ENCODE measurements at regions of chr16 and their contacts with region 1.

Region 1: GRCh38 chr16:85275533-85276249 is 163.4 kb upstream of the CIBAR2 start:
- DNase-seq: peak; percentile 95
- H3K4me3 ChIP-seq: peak overlapping the region in 1 of 2 experiments; percentile 21; a peak in 1 of 4 replicates
- H3K27ac ChIP-seq: peak overlapping the region in 1 of 2 experiments; percentile 31; a peak in 1 of 4 replicates
- H3K4me1 ChIP-seq: peaks cover 0 to 46% of the 10 kb centered on the region in 2 experiments; a peak in 2 of 4 replicates
- H3K27me3 ChIP-seq: no peaks in the 10 kb centered on the region
- CTCF ChIP-seq: peak; percentile 88
- EP300 ChIP-seq: no peak
- RAD21 ChIP-seq: peak; percentile 94

Region 2: GRCh38 chr16:85172455-85173145 is 103.1 kb before region 1 on chr16:
- CTCF ChIA-PET with region 1: interaction called, 15 read pairs
- POLR2A ChIA-PET with region 1: no interaction called
- DNase-seq: peak; percentile 83
- H3K4me3 ChIP-seq: peak overlapping the region; percentile 52 to 65
- H3K27ac ChIP-seq: peak overlapping the region; percentile 88 to 97
- H3K4me1 ChIP-seq: peaks cover 26 to 73% of the 10 kb centered on the region in 2 experiments
- H3K27me3 ChIP-seq: no peaks in the 10 kb centered on the region
- CTCF ChIP-seq: peak; percentile 53
- EP300 ChIP-seq: no peak
- RAD21 ChIP-seq: peak; percentile 44

Region 3: DNA sequence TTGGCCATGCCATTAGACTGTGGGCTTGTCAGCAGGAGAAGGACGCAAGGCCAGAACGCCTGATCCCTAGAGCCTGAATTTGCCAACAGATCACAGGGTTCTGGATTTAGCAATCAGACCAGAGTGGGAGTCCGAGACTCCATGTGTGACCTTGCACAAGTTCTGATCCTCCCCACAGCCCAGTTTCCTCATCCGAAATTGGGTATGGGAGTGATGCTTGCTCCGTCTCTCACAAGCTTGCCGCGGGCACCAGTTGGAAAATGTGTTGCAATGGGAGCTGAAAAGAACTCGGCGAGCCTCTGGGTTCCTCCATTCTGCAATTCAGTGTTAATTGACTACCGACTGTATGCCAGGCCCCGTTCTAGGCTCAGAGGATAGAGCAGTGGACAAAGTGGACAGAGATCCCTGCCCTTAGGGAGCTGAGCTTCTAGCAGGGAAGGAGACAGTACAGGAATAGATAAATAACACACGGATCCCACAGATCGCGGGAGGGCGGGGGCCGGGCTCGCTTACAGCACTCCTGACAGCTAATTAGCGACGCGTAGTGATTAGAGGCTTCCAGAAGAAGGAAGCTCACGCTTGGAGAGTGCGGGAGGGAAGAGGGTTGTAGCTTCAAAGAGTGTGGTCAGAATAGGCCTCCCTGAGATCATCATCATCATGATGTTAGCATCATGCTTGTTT is 13.0 kb before region 1 on chr16:
- CTCF ChIA-PET with region 1: interaction called, 54 read pairs
- POLR2A ChIA-PET with region 1: no interaction called
- DNase-seq: no peak
- H3K4me3 ChIP-seq: no peak overlapping the region
- H3K27ac ChIP-seq: no peak overlapping the region
- H3K4me1 ChIP-seq: peaks cover 0 to 57% of the 10 kb centered on the region in 2 experiments; a peak in 1 of 4 replicates
- H3K27me3 ChIP-seq: no peaks in the 10 kb centered on the region
- CTCF ChIP-seq: no peak
- EP300 ChIP-seq: no peak
- RAD21 ChIP-seq: no peak

Region 4: DNA sequence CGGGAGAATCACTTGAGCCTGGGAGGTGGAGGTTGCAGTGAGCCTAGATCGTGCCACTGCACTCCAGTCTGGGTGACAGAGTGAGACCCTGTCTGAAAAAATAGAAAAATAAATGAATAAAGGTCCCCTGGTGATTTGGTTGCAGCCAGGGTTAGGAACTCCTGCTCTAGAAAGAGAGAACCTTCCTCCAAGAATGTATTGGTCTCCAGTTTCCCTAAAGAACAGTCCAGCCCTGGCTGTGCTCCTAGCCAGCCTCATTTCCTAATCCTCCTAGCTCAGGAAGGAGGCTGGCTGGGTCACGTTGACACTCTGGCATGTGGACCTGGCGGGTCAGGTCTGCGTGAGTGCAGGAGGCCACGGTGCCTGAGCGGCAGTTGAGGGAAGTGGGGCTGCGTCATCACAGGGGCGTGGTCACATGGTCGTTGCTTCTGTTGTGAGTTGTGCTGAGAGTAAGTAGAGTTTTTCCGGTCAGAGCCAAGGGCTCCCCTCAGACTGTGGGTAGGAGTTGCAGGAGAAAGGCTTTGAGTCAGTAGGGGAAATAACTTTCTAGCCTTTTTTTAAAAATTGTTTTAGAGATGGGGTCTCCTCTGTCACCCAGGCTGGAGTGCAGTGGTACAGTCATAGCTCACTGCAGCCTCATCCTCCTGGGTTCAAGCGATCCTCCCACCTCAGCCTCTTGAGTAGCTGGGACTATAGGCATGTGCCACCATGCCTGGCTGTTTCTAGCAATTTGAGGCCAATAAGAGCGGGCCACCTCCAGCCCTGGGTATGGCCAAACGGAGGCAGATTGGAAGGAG is 30.5 kb after region 1 on chr16:
- CTCF ChIA-PET with region 1: interaction called, 19 read pairs
- POLR2A ChIA-PET with region 1: no interaction called
- DNase-seq: no peak
- H3K4me3 ChIP-seq: no peak overlapping the region
- H3K27ac ChIP-seq: no peak overlapping the region
- H3K4me1 ChIP-seq: peaks cover 0 to 36% of the 10 kb centered on the region in 2 experiments; a peak in 1 of 4 replicates
- H3K27me3 ChIP-seq: no peaks in the 10 kb centered on the region
- CTCF ChIP-seq: no peak
- EP300 ChIP-seq: no peak
- RAD21 ChIP-seq: no peak

Region 5: GRCh38 chr16:85369741-85370528 is 94.2 kb after region 1 on chr16:
- CTCF ChIA-PET with region 1: interaction called, 16 read pairs
- POLR2A ChIA-PET with region 1: no interaction called
- DNase-seq: peak; percentile 84
- H3K4me3 ChIP-seq: no peak overlapping the region
- H3K27ac ChIP-seq: peak overlapping the region; percentile 50 to 95; a peak in 3 of 4 replicates
- H3K4me1 ChIP-seq: peaks cover 25 to 90% of the 10 kb centered on the region in 2 experiments
- H3K27me3 ChIP-seq: no peaks in the 10 kb centered on the region
- CTCF ChIP-seq: peak; percentile 87
- EP300 ChIP-seq: no peak
- RAD21 ChIP-seq: peak; percentile 71

Region 6: GRCh38 chr16:85554112-85554813 is 278.6 kb after region 1 on chr16:
- CTCF ChIA-PET with region 1: interaction called, 11 read pairs
- POLR2A ChIA-PET with region 1: interaction called, 4 read pairs
- DNase-seq: peak; percentile 82
- H3K4me3 ChIP-seq: peak overlapping the region; percentile 75 to 84
- H3K27ac ChIP-seq: peak overlapping the region; percentile 73 to 99
- H3K4me1 ChIP-seq: peaks cover 10 to 51% of the 10 kb centered on the region in 2 experiments; a peak in 3 of 4 replicates
- H3K27me3 ChIP-seq: no peaks in the 10 kb centered on the region
- CTCF ChIP-seq: no peak
- EP300 ChIP-seq: peak in 1 of 2 experiments; percentile 87; a peak in 1 of 4 replicates
- RAD21 ChIP-seq: peak; percentile 15; the same call in 1 of the 2 replicates

Measured in SK-N-SH (cell line).